ENCODE measurements at regions of chr15 and their contacts with region 1.

Region 1: GRCh38 chr15:40906091-40906990 is 12.1 kb downstream of the VPS18 start:
- DNase-seq: peak; percentile 95
- ATAC-seq: peak; percentile 88
- H3K4me3 ChIP-seq: peak overlapping the region; percentile 47
- H3K27ac ChIP-seq: peak overlapping the region; percentile 80
- H3K4me1 ChIP-seq: peaks cover 49% of the 10 kb centered on the region
- H3K27me3 ChIP-seq: no peaks in the 10 kb centered on the region
- CTCF ChIP-seq: peak; percentile 85

Region 2: DNA sequence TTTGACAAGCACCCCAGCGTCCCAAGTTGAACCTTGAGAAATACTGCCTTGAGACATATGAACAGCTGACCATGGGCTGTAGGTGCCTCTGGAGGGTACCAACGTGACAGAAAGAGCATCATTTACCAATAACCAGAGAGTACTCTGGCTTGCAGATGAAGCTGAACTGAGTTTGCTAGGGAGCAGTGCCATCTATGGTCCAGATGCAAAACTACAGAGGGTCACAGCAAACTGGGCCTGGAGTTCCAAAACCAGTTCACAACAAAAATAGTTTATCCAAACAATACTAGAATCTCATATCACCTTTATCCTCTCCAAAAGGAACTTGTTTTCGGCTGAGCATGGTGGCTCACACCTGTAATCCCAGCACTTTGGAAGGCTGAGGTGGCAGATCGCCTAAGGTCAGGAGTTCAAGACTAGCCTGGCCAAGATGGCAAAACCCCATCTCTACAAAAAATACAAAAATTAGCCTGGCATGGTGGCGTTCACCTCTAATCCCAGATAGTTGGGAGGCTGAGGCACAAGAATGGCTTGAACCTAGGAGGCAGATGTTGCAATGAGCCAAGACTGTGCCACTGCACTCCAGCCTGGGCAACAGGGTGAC is 116.2 kb after region 1 on chr15:
- intact Hi-C with region 1: loop called (anchors 5 kb)
- DNase-seq: no peak
- ATAC-seq: peak; percentile 65
- H3K4me3 ChIP-seq: no peak overlapping the region
- H3K27ac ChIP-seq: no peak overlapping the region
- H3K4me1 ChIP-seq: peaks cover 45% of the 10 kb centered on the region
- H3K27me3 ChIP-seq: no peaks in the 10 kb centered on the region
- CTCF ChIP-seq: peak; percentile 72

Region 3: GRCh38 chr15:41169781-41170180 is 263.4 kb after region 1 on chr15:
- intact Hi-C with region 1: loop called (anchors 10 kb)
- DNase-seq: peak; percentile 74
- ATAC-seq: peak; percentile 84
- H3K4me3 ChIP-seq: no peak overlapping the region
- H3K27ac ChIP-seq: no peak overlapping the region
- H3K4me1 ChIP-seq: no peaks in the 10 kb centered on the region
- H3K27me3 ChIP-seq: no peaks in the 10 kb centered on the region
- CTCF ChIP-seq: no peak